Ascending aorta (tissue), 2 donors: ENCODE measurements at regions of chr11 and their contacts with region 1.

Region 1: GRCh38 chr11:103108933-103109817 is at the start of gene DYNC2H1:
- DNase-seq: peak in 1 of 2 donors; percentile 88
- H3K4me3 ChIP-seq: peak within 1 kb of the TSS; percentile 53 to 67
- H3K27ac ChIP-seq: peak within 1 kb of the TSS; percentile 44 to 58
- H3K4me1 ChIP-seq: no peaks in the 10 kb centered on the region
- H3K27me3 ChIP-seq: no peaks in the 10 kb centered on the region
- CTCF ChIP-seq: peak in 2 of 3 experiments; percentile 46 to 53
- total RNA-seq, gene DYNC2H1: 7.1 TPM

Region 2: GRCh38 chr11:103091801-103092524 is 17.2 kb before region 1 on chr11 and contains the start of gene DCUN1D5:
- intact Hi-C with region 1: loop called (anchors 1 kb)
- DNase-seq: peak; percentile 82 to 98
- H3K4me3 ChIP-seq: peak within 1 kb of the TSS; percentile 88 to 91
- H3K27ac ChIP-seq: peak within 1 kb of the TSS; percentile 66 to 76
- H3K4me1 ChIP-seq: peaks cover 0 to 15% of the 10 kb centered on the region in 2 donors
- H3K27me3 ChIP-seq: no peaks in the 10 kb centered on the region
- CTCF ChIP-seq: no peak
- total RNA-seq, gene DCUN1D5: 337 TPM

Region 3: GRCh38 chr11:103125462-103125861 is 16.3 kb after region 1 on chr11:
- intact Hi-C with region 1: no loop called
- DNase-seq: no peak
- H3K4me3 ChIP-seq: no peak overlapping the region
- H3K27ac ChIP-seq: no peak overlapping the region
- H3K4me1 ChIP-seq: no peaks in the 10 kb centered on the region
- H3K27me3 ChIP-seq: no peaks in the 10 kb centered on the region
- CTCF ChIP-seq: no peak

Region 4: GRCh38 chr11:103317118-103317517 is 207.9 kb after region 1 on chr11:
- intact Hi-C with region 1: no loop called
- DNase-seq: no peak
- H3K4me3 ChIP-seq: no peak overlapping the region
- H3K27ac ChIP-seq: no peak overlapping the region
- H3K4me1 ChIP-seq: no peaks in the 10 kb centered on the region
- H3K27me3 ChIP-seq: no peaks in the 10 kb centered on the region
- CTCF ChIP-seq: no peak